ENCODE measurements at regions of chr5 and their contacts with region 1.

Region 1: GRCh38 chr5:69048230-69048629 is 45.6 kb upstream of the SLC30A5 start:
- DNase-seq: no peak
- H3K4me3 ChIP-seq: no peak overlapping the region
- H3K27ac ChIP-seq: no peak overlapping the region
- H3K4me1 ChIP-seq: no peaks in the 10 kb centered on the region
- H3K27me3 ChIP-seq: no peaks in the 10 kb centered on the region
- CTCF ChIP-seq: no peak
- EP300 ChIP-seq: no peak
- POLR2A ChIP-seq: no peak

Region 2: DNA sequence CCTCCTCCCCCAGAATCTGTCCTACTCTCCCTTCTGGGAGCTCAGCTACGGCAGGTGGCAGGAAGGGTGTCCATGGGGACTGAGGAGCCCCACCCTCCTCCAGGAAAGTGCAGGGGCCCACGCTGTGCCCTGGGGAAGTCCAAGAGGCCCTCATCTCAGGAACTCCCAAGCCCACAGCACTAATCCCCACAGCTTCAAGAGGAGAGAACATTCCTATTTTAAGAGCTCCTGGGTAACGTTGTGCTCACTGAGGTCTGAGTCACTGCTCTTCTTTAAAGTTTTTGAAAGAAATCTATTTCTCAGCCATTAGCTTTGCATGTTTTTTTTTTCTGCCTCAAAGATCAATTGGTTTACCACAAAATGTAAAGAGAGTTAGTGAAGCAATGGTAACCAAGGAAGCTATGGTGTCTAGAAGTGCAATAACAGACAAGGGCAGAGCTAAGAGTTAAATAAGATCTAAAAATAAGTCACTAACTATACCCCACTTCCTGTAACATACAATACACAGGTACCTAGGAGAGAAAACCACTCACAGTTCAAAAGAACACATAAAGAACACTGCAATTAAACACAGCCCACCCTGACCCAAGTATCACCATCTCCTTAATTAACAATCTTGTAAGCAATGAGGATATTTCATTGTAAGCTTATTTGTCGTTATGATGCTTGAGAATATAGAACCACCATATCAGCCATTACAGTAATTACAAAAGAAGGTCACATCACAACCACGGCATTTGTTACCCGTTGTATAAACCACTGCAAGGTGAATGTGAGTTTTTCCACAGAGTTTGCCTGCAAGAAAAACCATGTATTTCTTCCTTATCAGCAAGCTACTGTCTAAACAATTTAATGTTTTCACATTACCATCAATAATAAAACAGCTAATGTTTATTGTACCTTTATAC is 336.7 kb before region 1 on chr5:
- intact Hi-C with region 1: no loop called
- DNase-seq: no peak
- H3K4me3 ChIP-seq: no peak overlapping the region
- H3K27ac ChIP-seq: no peak overlapping the region
- H3K4me1 ChIP-seq: no peaks in the 10 kb centered on the region
- H3K27me3 ChIP-seq: no peaks in the 10 kb centered on the region
- CTCF ChIP-seq: no peak
- EP300 ChIP-seq: no peak
- POLR2A ChIP-seq: no peak

Region 3: DNA sequence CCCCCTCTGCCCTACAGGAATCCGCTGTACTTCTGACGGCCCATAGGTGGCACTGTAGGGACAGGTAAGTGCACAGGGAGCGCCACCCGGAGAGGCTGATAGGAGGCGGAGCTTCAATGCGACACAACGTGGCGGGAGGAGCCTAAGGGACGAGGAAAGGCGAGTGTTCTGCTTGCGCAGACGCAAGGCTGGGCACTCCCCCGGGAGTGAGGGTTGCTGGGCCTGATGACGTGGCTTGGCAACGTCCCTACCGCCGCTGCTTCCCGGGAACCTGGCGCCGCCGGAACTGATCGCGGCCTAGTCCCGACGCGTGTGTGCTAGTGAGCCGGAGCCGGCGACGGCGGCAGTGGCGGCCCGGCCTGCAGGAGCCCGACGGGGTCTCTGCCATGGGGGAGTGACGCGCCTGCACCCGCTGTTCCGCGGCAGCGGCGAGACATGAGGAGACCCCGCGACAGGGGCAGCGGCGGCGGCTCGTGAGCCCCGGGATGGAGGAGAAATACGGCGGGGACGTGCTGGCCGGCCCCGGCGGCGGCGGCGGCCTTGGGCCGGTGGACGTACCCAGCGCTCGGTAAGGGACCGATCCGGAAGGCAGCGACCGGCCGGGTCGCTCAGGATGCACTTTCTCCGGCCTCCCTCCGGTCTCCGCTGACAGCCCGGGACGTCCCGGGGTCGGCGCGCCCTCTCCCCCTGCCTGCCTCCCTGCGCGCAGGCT is 45.7 kb after region 1 on chr5 and contains the start of gene SLC30A5:
- intact Hi-C with region 1: loop called in 1 of 4 experiments (anchors 2 kb)
- DNase-seq: peak; percentile 98 to 99 (median 99)
- H3K4me3 ChIP-seq: peak within 1 kb of the TSS; percentile 80
- H3K27ac ChIP-seq: peak within 1 kb of the TSS; percentile 63 to 86
- H3K4me1 ChIP-seq: peaks cover 2% of the 10 kb centered on the region
- H3K27me3 ChIP-seq: no peaks in the 10 kb centered on the region
- CTCF ChIP-seq: peak; percentile 85 to 93 (median 92)
- EP300 ChIP-seq: no peak
- POLR2A ChIP-seq: peak; percentile 74
- total RNA-seq, gene SLC30A5: 34.9 to 61.5 (median 46.5) TPM

Measured in ovary (tissue), 10 donors.